Activated CD4-positive, alpha-beta memory T cell treated with anti-CD3 and anti-CD28 coated beads for 36 hours (primary cell): ENCODE measurements at regions of chr19 and their contacts with region 1.

Region 1: GRCh38 chr19:44723952-44724319 is 24.6 kb upstream of the BCL3 start:
- DNase-seq: peak; percentile 88
- H3K4me3 Mint-ChIP-seq: no peak overlapping the region
- H3K27ac Mint-ChIP-seq: peak overlapping the region; percentile 10
- H3K4me1 Mint-ChIP-seq: peaks cover 35% of the 10 kb centered on the region
- H3K27me3 Mint-ChIP-seq: peaks cover 2% of the 10 kb centered on the region

Region 2: GRCh38 chr19:44706506-44707236 is 17.3 kb before region 1 on chr19:
- CTCF ChIA-PET with region 1: interaction called, 32 read pairs
- POLR2A ChIA-PET with region 1: no interaction called
- intact Hi-C with region 1: no loop called
- DNase-seq: no peak
- H3K4me3 Mint-ChIP-seq: no peak overlapping the region
- H3K27ac Mint-ChIP-seq: no peak overlapping the region
- H3K4me1 Mint-ChIP-seq: no peaks in the 10 kb centered on the region
- H3K27me3 Mint-ChIP-seq: no peaks in the 10 kb centered on the region

Region 3: GRCh38 chr19:44741841-44742352 is 18.0 kb after region 1 on chr19:
- CTCF ChIA-PET with region 1: interaction called, 28 read pairs
- POLR2A ChIA-PET with region 1: no interaction called
- intact Hi-C with region 1: no loop called
- DNase-seq: peak; percentile 63
- H3K4me3 Mint-ChIP-seq: no peak overlapping the region
- H3K27ac Mint-ChIP-seq: peak overlapping the region; percentile 76
- H3K4me1 Mint-ChIP-seq: peaks cover 28% of the 10 kb centered on the region
- H3K27me3 Mint-ChIP-seq: no peaks in the 10 kb centered on the region

Region 4: DNA sequence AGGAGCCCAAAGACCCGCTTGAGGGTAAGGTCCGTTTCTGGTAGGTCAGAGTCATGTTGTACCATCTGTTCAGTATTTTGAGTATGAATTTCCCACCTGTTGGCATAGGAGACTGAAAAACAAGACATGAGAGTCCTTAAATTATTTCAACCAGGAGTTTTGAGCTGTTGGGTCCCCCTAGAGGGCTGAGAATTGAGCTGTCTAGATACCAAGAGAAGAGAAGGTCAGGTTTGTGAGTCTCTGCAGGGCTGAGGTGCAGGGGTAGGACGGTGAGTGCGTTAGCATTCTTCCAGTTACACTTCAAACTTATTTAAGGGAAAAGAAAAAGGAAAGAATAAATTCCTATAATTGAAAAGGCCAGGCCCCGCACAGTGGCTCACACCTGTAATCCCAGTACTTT is 58.8 kb after region 1 on chr19:
- CTCF ChIA-PET with region 1: interaction called, 434 read pairs
- POLR2A ChIA-PET with region 1: no interaction called
- intact Hi-C with region 1: no loop called
- DNase-seq: no peak
- H3K4me3 Mint-ChIP-seq: no peak overlapping the region
- H3K27ac Mint-ChIP-seq: no peak overlapping the region
- H3K4me1 Mint-ChIP-seq: peaks cover 4% of the 10 kb centered on the region
- H3K27me3 Mint-ChIP-seq: peaks cover 3% of the 10 kb centered on the region

Region 5: DNA sequence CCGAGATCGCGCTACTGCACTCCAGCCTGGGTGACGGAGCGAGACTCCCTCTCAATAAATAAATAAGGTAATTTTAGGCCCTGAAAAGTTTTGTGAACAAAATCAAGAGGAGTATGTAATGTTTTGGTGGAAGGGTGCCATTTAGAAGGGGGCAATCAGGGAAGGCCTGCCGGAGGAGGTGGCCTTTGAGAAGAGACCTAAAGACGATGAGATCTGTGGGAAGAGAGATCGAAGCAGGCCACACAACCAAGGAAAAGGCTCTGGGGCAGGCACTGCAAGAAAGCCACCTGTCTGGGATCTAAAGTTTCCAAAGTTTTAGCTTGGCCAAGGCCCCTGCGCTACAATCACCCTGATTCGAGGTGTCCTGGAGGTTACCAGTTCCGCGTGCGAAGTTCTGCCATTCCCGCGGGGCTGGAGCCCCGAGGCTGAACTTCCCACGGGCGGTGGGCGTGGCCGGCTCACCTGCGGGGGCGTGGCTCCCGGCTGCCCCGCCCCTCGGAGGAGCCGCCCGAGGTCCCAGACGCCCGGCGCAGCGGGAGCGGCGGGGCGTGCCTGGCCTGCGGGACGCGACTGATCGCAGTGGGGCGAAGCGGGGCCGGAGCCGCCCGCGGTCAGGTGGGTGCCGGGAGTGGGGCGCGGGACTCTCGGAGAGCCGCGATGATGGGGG is 616.4 kb after region 1 on chr19 and contains the start of gene KLC3:
- CTCF ChIA-PET with region 1: no interaction called
- POLR2A ChIA-PET with region 1: no interaction called
- intact Hi-C with region 1: no loop called
- DNase-seq: peak; percentile 55
- H3K4me3 Mint-ChIP-seq: peak within 1 kb of the TSS; percentile 36
- H3K27ac Mint-ChIP-seq: no peak within 1 kb of the TSS
- H3K4me1 Mint-ChIP-seq: peaks cover 4% of the 10 kb centered on the region
- H3K27me3 Mint-ChIP-seq: peaks cover 21% of the 10 kb centered on the region
- total RNA-seq, gene KLC3: not detected